Lower leg skin (tissue), 4 donors: ENCODE measurements at regions of chr5 and their contacts with region 1.

Region 1: GRCh38 chr5:98827161-98827560 is 53.7 kb downstream of the RGMB start:
- DNase-seq: no peak
- H3K4me3 ChIP-seq: no peak overlapping the region
- CTCF ChIP-seq: no peak
- POLR2A ChIP-seq: no peak

Region 2: DNA sequence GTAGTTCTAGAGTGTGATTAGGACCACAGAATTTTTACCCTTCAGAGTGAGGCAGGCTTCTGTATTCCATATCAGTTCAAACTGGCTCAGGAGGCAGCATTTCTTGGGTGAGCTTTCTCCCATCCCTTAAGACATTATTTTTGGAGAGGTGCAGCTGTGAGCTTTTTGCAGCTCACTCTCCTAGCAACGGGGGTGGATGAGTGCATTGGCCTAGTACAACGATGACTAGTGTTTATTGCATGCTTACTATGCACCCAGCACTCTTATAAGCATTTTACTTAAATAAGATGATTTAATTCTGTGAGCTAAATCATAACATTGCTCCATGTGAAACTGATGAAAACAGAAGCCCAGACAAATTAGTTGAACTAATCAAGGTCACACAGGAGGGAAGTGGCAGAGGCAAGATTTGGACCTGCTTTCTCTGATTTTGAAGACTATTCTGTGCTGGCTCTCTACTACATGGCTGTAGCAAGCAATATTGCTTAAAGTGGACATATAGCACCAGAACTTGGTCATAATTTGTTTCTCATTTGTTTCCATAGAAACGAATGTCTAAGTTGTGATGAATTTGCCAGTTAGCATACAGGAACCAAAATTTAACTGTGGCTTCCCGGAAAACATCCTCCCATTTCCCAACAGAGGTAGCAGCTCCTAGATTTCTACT is 1272.1 kb before region 1 on chr5:
- intact Hi-C with region 1: loop called (anchors 5 kb)
- DNase-seq: no peak
- H3K4me3 ChIP-seq: no peak overlapping the region
- CTCF ChIP-seq: no peak
- POLR2A ChIP-seq: no peak

Region 3: GRCh38 chr5:98774192-98775033 is 52.7 kb before region 1 on chr5:
- intact Hi-C with region 1: no loop called
- DNase-seq: peak; percentile 49 to 95
- H3K4me3 ChIP-seq: peak overlapping the region; percentile 81
- CTCF ChIP-seq: no peak
- POLR2A ChIP-seq: no peak